HEK293 (cell line): ENCODE measurements at regions of chr2 and their contacts with region 1.

Region 1: GRCh38 chr2:84970868-84971509 is at the start of gene KCMF1:
- H3K4me3 ChIP-seq: peak within 1 kb of the TSS; percentile 86
- H3K27ac ChIP-seq: peak within 1 kb of the TSS; percentile 99
- H3K4me1 ChIP-seq: peaks cover 10% of the 10 kb centered on the region
- CTCF ChIP-seq: no peak

Region 2: GRCh38 chr2:84958135-84959044 is 12.6 kb before region 1 on chr2:
- CTCF ChIA-PET with region 1: no interaction called
- POLR2A ChIA-PET with region 1: interaction called, 59 read pairs
- H3K4me3 ChIP-seq: no peak overlapping the region
- H3K27ac ChIP-seq: peak overlapping the region; percentile 59
- H3K4me1 ChIP-seq: peaks cover 27% of the 10 kb centered on the region
- CTCF ChIP-seq: no peak